Left cardiac atrium (tissue), 4 donors: ENCODE measurements at regions of chr9 and their contacts with region 1.

Region 1: DNA sequence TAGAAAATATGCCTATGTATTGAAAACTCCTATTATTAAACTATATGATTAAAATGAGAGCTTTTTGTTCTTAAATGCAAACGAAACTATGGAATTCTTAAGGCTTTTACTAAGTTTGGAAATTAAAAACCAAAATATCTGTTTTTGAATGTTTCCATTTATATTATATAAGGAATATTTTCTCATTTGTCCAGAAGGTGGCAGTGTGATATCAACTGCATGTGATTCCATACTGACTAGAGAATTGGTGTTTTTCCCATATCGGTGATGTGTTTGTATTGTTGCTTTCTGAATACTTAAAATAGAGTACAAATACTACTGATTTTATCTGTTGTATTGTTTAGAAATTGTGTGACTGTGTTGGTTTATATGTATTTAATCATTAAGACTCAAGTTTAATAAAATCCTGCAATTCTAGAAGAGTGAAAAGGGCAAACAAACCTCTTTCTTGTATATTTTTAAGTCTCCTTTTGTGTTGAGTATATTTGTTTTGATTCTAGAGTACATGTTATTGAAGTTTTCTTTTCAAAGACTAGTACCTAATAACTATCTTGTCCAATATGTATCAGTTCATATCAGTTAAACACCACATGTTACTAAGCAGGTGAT is 320.8 kb downstream of the CCDC171 start:
- DNase-seq: no peak
- ATAC-seq: no peak

Region 2: DNA sequence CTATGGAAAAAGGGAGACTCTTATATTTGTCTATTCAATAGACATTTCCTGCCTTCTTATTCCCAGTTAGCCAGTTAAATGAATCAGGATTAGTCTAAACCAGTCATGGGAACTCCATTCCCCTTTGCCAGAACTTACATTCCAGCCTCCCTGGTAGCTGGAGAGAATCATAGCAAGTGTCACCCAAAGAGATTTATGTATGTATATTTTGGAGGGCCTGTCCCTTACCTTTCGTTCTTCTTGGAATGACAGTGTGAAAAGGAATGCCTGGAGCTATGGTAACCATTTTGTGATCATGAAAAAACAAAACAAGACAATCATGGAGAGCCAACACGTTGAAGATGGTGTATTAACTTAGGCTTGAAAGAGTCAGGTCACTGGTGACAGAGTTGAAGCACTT is 306.9 kb after region 1 on chr9:
- intact Hi-C with region 1: loop called in 1 of 2 experiments (anchors 10 kb)
- DNase-seq: no peak
- ATAC-seq: no peak

Region 3: DNA sequence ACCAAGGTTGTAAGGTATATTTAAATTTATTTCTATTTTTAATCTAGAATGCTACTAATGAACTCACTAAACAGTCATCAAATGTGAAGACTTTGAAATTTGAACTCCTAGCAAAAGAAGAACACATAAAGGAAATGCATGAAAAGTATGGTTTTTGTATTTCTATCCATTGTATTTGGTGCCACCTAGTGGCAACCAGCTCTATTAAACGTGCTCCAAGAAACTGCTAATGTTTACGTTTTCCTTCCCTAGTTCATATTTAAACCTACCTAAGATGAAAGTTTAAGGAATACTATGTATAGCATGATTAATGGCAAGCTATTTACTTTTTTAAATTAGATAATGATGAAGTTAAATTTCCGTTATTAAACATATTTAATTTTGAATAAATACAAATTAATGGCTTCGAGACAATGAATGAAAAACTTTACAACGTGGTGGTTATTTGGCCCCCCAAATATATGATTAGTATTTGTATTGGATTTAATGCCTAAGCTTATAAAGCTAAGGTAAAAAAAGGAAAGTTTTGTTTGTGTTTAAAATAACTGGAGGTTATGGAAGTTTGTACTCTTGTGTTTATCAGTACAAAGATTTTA is 1589.3 kb after region 1 on chr9:
- intact Hi-C with region 1: loop called in 1 of 2 experiments (anchors 5 kb)
- DNase-seq: no peak
- ATAC-seq: no peak